ENCODE measurements at regions of chr3 and their contacts with region 1.

Region 1: DNA sequence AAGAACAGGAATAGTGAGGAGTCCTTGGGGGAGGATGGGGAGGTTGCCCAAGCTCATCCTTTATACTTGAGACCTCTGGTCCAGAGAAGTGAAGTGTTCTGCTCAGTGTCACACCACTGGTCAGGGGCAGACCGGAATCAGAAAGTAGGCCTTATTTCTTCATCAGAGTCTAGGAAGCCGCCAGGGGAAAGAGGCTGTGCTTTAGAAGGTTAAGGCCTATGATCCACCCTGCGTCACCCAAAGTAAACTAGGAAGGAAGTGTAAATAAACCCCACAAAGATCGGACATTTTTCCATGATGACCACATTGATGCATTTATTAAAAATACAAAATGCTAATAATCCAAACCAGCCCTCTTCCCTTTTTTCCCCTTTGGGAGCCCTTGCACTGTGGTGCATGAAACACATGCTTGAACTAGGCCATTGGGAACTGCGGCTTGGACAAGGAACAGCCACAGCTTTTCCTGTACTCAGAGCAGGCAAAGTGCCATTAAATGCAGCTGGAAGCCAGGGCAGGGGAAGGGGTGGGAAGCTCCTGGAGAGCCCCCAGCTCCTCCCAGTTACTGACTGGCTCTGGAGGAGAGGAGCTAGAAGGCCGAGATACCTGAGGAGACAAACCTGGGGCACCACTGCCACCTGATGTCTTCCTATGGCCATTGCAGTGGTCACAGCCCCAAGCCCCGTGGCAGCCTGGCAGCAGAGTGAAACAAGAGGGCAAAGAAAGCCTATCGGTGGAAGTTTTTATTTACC is 37.0 kb downstream of the CDC25A start:
- DNase-seq: peak; percentile 72
- H3K4me3 Mint-ChIP-seq: no peak overlapping the region
- H3K27ac Mint-ChIP-seq: no peak overlapping the region
- H3K4me1 Mint-ChIP-seq: no peaks in the 10 kb centered on the region
- H3K27me3 Mint-ChIP-seq: no peaks in the 10 kb centered on the region

Region 2: DNA sequence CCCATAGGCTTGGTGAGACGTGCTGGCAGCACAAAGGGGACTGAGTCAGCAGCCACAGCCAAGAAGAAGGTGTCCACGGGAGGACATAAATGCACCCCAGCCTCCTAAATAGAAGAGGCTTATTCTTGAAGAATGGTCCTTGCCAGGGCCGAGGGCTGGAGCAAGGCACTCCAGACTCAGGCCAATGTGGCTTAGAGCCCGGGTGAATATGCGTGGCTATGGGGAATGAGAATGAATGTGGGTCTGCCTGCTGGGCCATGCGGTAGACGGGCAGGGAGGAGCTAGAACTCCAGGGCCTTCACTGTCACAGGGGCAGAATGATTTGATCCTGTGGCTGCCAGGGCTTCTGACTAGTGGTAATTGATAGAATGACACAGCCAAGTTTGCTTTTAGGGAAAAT is 314.2 kb before region 1 on chr3:
- CTCF ChIA-PET with region 1: interaction called, 19 read pairs
- POLR2A ChIA-PET with region 1: no interaction called
- DNase-seq: no peak
- H3K4me3 Mint-ChIP-seq: no peak overlapping the region
- H3K27ac Mint-ChIP-seq: no peak overlapping the region
- H3K4me1 Mint-ChIP-seq: no peaks in the 10 kb centered on the region
- H3K27me3 Mint-ChIP-seq: no peaks in the 10 kb centered on the region

Region 3: DNA sequence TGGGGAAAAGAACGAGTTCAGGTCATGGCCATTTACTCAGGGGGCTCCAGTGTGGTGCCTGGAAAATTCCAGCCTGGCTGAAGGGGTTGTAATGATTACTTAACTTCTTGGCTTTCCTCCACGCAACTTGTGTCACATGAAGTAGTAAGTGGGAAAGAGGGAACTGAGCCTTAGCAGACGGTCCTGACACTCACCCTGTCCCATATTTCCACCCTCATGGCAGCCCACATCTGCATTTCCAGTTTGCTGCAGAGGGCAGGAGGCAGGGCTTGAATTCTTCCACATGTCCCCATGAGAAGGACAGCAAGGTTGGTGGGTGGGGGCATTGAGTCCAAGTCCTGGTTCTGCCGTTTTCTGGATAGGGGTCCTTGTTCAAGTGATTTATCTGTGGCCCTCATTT is 64.2 kb after region 1 on chr3:
- CTCF ChIA-PET with region 1: no interaction called
- POLR2A ChIA-PET with region 1: no interaction called
- DNase-seq: no peak
- H3K4me3 Mint-ChIP-seq: no peak overlapping the region
- H3K27ac Mint-ChIP-seq: no peak overlapping the region
- H3K4me1 Mint-ChIP-seq: no peaks in the 10 kb centered on the region
- H3K27me3 Mint-ChIP-seq: no peaks in the 10 kb centered on the region